CD4-positive, alpha-beta memory T cell (primary cell): ENCODE measurements at regions of chr3 and their contacts with region 1.

Region 1: DNA sequence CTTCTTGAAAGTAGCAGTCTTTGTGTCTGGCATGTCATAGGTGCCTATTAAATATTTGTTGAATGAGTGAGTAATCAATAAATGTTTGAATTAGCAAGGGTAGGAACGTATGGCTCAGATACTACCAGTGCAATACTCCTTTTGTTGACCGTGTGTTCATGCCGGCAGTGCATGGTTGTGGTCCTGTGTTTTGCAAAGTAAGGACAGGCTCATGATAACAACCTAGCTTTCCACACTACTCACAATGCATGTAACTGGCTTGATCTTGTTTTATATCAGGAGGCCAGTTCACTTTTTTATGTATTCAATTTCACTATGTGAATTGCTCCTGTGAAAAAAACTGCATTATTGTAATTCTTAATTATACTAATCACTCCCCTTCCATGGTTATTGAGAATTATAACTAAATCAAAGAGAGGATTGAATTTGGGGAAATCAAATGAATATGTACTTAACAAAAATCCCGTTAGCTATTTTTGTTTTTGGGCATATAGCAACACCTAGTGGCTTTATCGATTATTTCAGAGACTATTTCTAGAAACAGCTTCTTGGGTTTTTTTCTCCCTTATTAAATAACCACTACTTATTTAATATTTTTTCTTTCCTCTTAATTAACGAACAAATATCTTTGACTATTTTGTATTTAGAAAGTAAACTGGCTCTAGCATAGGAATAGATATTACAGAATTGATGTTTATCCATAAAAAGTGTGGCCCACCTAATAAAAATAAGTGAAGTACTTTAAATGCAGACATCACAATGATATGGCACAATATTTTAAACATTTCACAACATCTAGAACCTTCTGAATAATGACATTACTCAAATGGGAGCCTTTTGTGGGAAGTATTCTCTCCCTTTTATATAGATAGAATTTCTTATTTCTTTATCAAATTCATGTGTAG is 218.5 kb downstream of the BBX start:
- DNase-seq: peak in 4 of 5 donors; percentile 13 to 28 (median 23)
- H3K4me3 ChIP-seq: no peak overlapping the region
- H3K4me3 Mint-ChIP-seq: no peak overlapping the region
- H3K27ac ChIP-seq: no peak overlapping the region
- H3K27ac Mint-ChIP-seq: no peak overlapping the region
- H3K4me1 ChIP-seq: no peaks in the 10 kb centered on the region
- H3K4me1 Mint-ChIP-seq: peaks cover 0 to 7% (median under 1%) of the 10 kb centered on the region in 4 donors
- H3K27me3 ChIP-seq: no peaks in the 10 kb centered on the region
- H3K27me3 Mint-ChIP-seq: no peaks in the 10 kb centered on the region

Region 2: GRCh38 chr3:107555359-107555758 is 185.9 kb before region 1 on chr3:
- CTCF ChIA-PET with region 1: no interaction called
- POLR2A ChIA-PET with region 1: no interaction called
- intact Hi-C with region 1: no loop called
- DNase-seq: no peak
- H3K4me3 ChIP-seq: no peak overlapping the region
- H3K4me3 Mint-ChIP-seq: no peak overlapping the region
- H3K27ac ChIP-seq: no peak overlapping the region
- H3K27ac Mint-ChIP-seq: peak overlapping the region in 1 of 7 donors; percentile 33
- H3K4me1 ChIP-seq: peaks cover 12% of the 10 kb centered on the region
- H3K4me1 Mint-ChIP-seq: peaks cover 43 to 78% (median 54%) of the 10 kb centered on the region in 4 donors
- H3K27me3 ChIP-seq: no peaks in the 10 kb centered on the region
- H3K27me3 Mint-ChIP-seq: no peaks in the 10 kb centered on the region

Region 3: DNA sequence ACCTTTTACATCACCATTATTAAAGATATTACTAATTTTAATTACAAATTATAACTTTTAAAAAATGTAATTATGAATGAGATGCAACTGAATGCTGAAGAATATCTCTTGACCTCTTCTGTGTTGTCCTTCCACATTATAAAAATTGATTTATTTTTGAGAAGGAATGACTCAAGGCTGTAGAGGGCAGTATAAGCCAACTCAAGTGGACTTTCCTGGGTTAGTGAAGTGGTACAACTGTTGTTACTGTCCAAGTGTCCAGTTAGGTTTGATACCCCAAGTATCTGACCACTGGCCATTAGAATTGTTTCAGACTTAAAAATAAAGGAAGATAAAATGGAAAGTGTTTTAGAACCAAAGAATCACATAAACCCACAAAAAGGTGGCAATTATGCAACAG is 166.6 kb before region 1 on chr3:
- CTCF ChIA-PET with region 1: interaction called, 5 read pairs
- POLR2A ChIA-PET with region 1: no interaction called
- intact Hi-C with region 1: loop called (anchors 5 kb)
- DNase-seq: peak in 1 of 5 donors; percentile 20
- H3K4me3 ChIP-seq: no peak overlapping the region
- H3K4me3 Mint-ChIP-seq: no peak overlapping the region
- H3K27ac ChIP-seq: no peak overlapping the region
- H3K27ac Mint-ChIP-seq: peak overlapping the region in 1 of 7 donors; percentile 8
- H3K4me1 ChIP-seq: peaks cover 15% of the 10 kb centered on the region
- H3K4me1 Mint-ChIP-seq: peaks cover 29 to 47% (median 38%) of the 10 kb centered on the region in 4 donors
- H3K27me3 ChIP-seq: no peaks in the 10 kb centered on the region
- H3K27me3 Mint-ChIP-seq: no peaks in the 10 kb centered on the region

Region 4: GRCh38 chr3:107660306-107660976 is 80.8 kb before region 1 on chr3:
- CTCF ChIA-PET with region 1: interaction called, 33 read pairs
- POLR2A ChIA-PET with region 1: no interaction called
- intact Hi-C with region 1: loop called (anchors 1 kb)
- DNase-seq: peak in 4 of 5 donors; percentile 19 to 36 (median 27)
- H3K4me3 ChIP-seq: no peak overlapping the region
- H3K4me3 Mint-ChIP-seq: no peak overlapping the region
- H3K27ac ChIP-seq: no peak overlapping the region
- H3K27ac Mint-ChIP-seq: no peak overlapping the region
- H3K4me1 ChIP-seq: peaks cover 17% of the 10 kb centered on the region
- H3K4me1 Mint-ChIP-seq: peaks cover 18 to 28% (median 22%) of the 10 kb centered on the region in 4 donors
- H3K27me3 ChIP-seq: no peaks in the 10 kb centered on the region
- H3K27me3 Mint-ChIP-seq: no peaks in the 10 kb centered on the region

Region 5: DNA sequence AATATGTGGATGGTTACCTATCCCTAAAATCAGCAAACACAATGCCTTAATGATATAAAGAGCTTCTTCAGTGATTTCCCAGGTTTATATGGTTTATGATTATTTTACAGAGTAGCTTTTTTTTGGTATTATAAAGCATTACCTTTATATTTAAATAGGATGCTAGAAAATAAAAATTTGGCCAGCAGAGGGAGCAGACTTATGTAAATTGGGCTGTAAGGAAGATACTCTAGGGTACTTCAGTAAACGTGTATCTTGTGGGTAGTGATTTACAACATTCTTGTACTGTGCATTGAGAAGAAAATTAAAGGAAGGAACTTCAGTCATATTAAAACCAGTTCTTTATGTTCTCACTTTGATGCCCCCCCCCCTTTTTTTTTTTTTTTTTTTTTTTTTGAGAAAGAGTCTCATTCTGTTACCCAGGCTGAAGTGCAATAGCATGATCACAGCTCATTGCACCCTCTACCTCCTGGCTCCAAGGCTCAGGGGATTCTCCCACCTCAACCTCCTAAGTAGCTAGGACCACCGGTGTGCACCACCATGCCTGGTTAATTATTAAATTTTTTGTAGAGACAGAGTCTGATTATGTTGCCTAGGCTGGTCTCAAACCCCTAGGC is 50.6 kb before region 1 on chr3:
- CTCF ChIA-PET with region 1: interaction called, 16 read pairs
- POLR2A ChIA-PET with region 1: no interaction called
- intact Hi-C with region 1: loop called (anchors 1 kb)
- DNase-seq: peak in 4 of 5 donors; percentile 28 to 42 (median 34)
- H3K4me3 ChIP-seq: no peak overlapping the region
- H3K4me3 Mint-ChIP-seq: no peak overlapping the region
- H3K27ac ChIP-seq: no peak overlapping the region
- H3K27ac Mint-ChIP-seq: peak overlapping the region in 1 of 7 donors; percentile 83
- H3K4me1 ChIP-seq: peaks cover 11% of the 10 kb centered on the region
- H3K4me1 Mint-ChIP-seq: peaks cover 9 to 20% (median 12%) of the 10 kb centered on the region in 4 donors
- H3K27me3 ChIP-seq: no peaks in the 10 kb centered on the region
- H3K27me3 Mint-ChIP-seq: no peaks in the 10 kb centered on the region

Region 6: DNA sequence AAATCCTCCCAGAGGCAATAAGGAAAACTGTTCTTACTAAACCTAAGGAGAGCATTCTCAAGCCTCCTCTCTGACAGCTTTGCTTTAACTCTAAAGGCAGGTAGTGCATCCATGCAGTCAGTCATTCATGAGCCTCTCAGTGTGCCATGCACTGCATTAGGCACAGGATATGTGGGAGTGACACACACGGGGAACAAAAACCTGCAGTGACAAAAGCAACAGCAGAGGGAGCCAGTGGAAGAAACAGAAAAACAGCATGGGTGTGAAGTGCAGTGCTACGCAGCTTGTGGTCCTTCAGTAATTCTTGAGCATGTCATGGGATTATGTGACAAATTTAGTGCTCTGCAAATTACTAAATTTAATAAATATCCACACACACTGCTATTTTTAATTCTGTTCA is 12.2 kb after region 1 on chr3:
- CTCF ChIA-PET with region 1: interaction called, 23 read pairs
- POLR2A ChIA-PET with region 1: no interaction called
- intact Hi-C with region 1: no loop called
- DNase-seq: peak in 1 of 5 donors; percentile 8
- H3K4me3 ChIP-seq: no peak overlapping the region
- H3K4me3 Mint-ChIP-seq: no peak overlapping the region
- H3K27ac ChIP-seq: no peak overlapping the region
- H3K27ac Mint-ChIP-seq: peak overlapping the region in 2 of 7 donors; percentile 18 to 34
- H3K4me1 ChIP-seq: no peaks in the 10 kb centered on the region
- H3K4me1 Mint-ChIP-seq: peaks cover 0 to 4% (median 2%) of the 10 kb centered on the region in 4 donors
- H3K27me3 ChIP-seq: no peaks in the 10 kb centered on the region
- H3K27me3 Mint-ChIP-seq: no peaks in the 10 kb centered on the region

Region 7: GRCh38 chr3:107825601-107826000 is 84.4 kb after region 1 on chr3:
- CTCF ChIA-PET with region 1: no interaction called
- POLR2A ChIA-PET with region 1: no interaction called
- intact Hi-C with region 1: no loop called
- DNase-seq: no peak
- H3K4me3 ChIP-seq: no peak overlapping the region
- H3K4me3 Mint-ChIP-seq: no peak overlapping the region
- H3K27ac ChIP-seq: no peak overlapping the region
- H3K27ac Mint-ChIP-seq: no peak overlapping the region
- H3K4me1 ChIP-seq: no peaks in the 10 kb centered on the region
- H3K4me1 Mint-ChIP-seq: no peaks in the 10 kb centered on the region
- H3K27me3 ChIP-seq: no peaks in the 10 kb centered on the region
- H3K27me3 Mint-ChIP-seq: peaks cover 8 to 11% of the 10 kb centered on the region in 2 donors